Psoas muscle (tissue), 8 donors: ENCODE measurements at regions of chr3 and their contacts with region 1.

Region 1: GRCh38 chr3:129942296-129942695 is 32.2 kb upstream of the TRH start:
- DNase-seq: peak; percentile 44 to 59
- ATAC-seq: peak; percentile 72 to 91 (median 77)
- H3K4me3 ChIP-seq: no peak overlapping the region
- H3K27ac ChIP-seq: no peak overlapping the region
- H3K4me1 ChIP-seq: no peaks in the 10 kb centered on the region
- H3K27me3 ChIP-seq: peaks cover 0 to 4% (median 0%) of the 10 kb centered on the region in 3 donors
- CTCF ChIP-seq: peak; percentile 58

Region 2: GRCh38 chr3:129994883-129995559 is 52.7 kb after region 1 on chr3:
- intact Hi-C with region 1: loop called in 1 of 2 experiments (anchors 5 kb)
- DNase-seq: no peak
- ATAC-seq: no peak
- H3K4me3 ChIP-seq: no peak overlapping the region
- H3K27ac ChIP-seq: no peak overlapping the region
- H3K4me1 ChIP-seq: no peaks in the 10 kb centered on the region
- H3K27me3 ChIP-seq: no peaks in the 10 kb centered on the region
- CTCF ChIP-seq: no peak

Region 3: DNA sequence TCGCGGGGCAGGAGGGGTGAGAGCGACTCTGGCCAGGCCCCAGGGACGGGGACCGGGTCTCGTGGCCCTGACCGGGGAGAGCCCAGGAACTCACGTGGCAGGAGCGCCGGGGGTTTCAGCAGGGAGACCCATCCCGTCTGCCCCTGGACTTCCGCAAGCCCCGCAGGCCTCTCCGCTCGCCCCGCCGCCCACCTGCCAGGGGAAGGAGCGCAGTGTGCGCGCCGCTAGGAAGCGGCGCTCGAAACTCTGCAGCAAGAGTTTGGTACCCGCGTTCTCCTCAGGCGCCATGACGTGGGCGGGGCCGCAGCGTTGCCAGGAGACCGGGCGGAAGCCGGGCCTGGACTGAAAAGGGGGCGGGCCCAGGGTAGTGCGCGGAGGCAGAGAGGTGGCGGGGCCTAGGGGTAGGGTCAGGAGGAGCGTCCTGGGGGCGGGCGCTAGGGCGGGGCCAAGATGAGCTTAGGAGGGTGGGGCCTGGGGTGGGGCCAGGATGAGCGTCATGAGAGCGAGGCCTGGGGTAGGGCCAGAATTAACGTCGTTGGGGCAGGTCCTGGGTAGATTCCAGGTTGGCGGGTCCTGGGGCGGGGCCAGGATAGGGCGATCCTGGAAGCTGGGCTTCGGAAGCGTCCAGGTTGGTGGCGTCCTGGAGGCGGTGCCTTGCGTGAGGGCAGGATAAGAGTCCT is 169.0 kb after region 1 on chr3:
- intact Hi-C with region 1: loop called (anchors 5 kb)
- DNase-seq: peak; percentile 100
- ATAC-seq: peak; percentile 100
- H3K4me3 ChIP-seq: peak overlapping the region; percentile 84
- H3K27ac ChIP-seq: peak overlapping the region; percentile 76
- H3K4me1 ChIP-seq: peaks cover 6% of the 10 kb centered on the region
- H3K27me3 ChIP-seq: no peaks in the 10 kb centered on the region
- CTCF ChIP-seq: no peak